K562 (cell line): ENCODE measurements at regions of chrX and their contacts with region 1.

Region 1: GRCh38 chrX:23782863-23783568 is at the start of gene SAT1:
- DNase-seq: peak; percentile 89 to 97 (median 91)
- ATAC-seq: peak; percentile 94
- H3K4me3 ChIP-seq: peak within 1 kb of the TSS; percentile 69
- H3K27ac ChIP-seq: peak within 1 kb of the TSS; percentile 92
- H3K4me1 ChIP-seq: peaks cover 10 to 11% of the 10 kb centered on the region in 2 experiments; a peak in 3 of 5 replicates
- H3K27me3 ChIP-seq: no peaks in the 10 kb centered on the region
- CTCF ChIP-seq: peak; percentile 76 to 84 (median 83)
- EP300 ChIP-seq: 0 out of 2 replicates have a peak, but pooled peaks have one; percentile 21
- POLR2A ChIP-seq: peak; percentile 99
- RAD21 ChIP-seq: peak; percentile 83 to 88
- polyA plus RNA-seq, gene SAT1: 161 to 194 TPM

Region 2: DNA sequence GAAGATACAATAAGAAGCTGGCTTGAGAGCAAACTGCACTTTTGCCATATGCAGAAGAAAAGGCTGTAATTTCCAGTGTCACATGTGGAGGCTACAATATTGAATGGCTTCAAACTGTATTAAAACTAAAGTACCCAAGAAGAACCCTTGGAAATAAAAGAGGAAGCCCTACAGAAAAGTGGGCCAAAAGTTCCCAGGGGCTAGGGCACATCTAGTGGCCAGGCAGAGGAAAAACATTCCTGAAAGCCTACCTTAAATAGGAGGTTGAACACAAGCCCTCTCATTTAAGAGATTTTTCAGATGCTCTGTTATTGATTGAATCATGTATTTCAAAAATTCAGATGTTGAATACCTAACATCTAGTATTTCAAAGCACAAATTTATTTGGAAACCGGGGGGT is 156.4 kb before region 1 on chrX:
- CTCF ChIA-PET with region 1: no interaction called
- POLR2A ChIA-PET with region 1: no interaction called
- in situ Hi-C with region 1: no loop called
- intact Hi-C with region 1: no loop called
- DNase-seq: no peak
- ATAC-seq: 0 out of 3 replicates have a peak, but pooled peaks have one; percentile 44
- H3K4me3 ChIP-seq: no peak overlapping the region
- H3K27ac ChIP-seq: no peak overlapping the region
- H3K4me1 ChIP-seq: no peaks in the 10 kb centered on the region
- H3K27me3 ChIP-seq: peaks cover 2 to 4% of the 10 kb centered on the region in 2 experiments; a peak in 1 of 5 replicates
- CTCF ChIP-seq: peak in 2 of 3 experiments; percentile 13 to 22; a peak in 2 of 6 replicates
- EP300 ChIP-seq: no peak
- POLR2A ChIP-seq: no peak
- RAD21 ChIP-seq: no peak

Region 3: GRCh38 chrX:23694606-23695005 is 88.4 kb before region 1 on chrX:
- CTCF ChIA-PET with region 1: interaction called, 3 read pairs
- POLR2A ChIA-PET with region 1: interaction called, 3 read pairs
- in situ Hi-C with region 1: no loop called
- intact Hi-C with region 1: loop called (anchors 2 kb)
- DNase-seq: peak; percentile 47 to 78 (median 58)
- ATAC-seq: peak; percentile 91
- H3K4me3 ChIP-seq: no peak overlapping the region
- H3K27ac ChIP-seq: no peak overlapping the region
- H3K4me1 ChIP-seq: peaks cover 0 to 4% of the 10 kb centered on the region in 2 experiments; a peak in 3 of 5 replicates
- H3K27me3 ChIP-seq: no peaks in the 10 kb centered on the region
- CTCF ChIP-seq: peak in 2 of 3 experiments; percentile 67 to 72; a peak in 4 of 6 replicates
- EP300 ChIP-seq: no peak
- POLR2A ChIP-seq: no peak
- RAD21 ChIP-seq: peak in 1 of 2 experiments; percentile 58; a peak in 2 of 4 replicates

Region 4: DNA sequence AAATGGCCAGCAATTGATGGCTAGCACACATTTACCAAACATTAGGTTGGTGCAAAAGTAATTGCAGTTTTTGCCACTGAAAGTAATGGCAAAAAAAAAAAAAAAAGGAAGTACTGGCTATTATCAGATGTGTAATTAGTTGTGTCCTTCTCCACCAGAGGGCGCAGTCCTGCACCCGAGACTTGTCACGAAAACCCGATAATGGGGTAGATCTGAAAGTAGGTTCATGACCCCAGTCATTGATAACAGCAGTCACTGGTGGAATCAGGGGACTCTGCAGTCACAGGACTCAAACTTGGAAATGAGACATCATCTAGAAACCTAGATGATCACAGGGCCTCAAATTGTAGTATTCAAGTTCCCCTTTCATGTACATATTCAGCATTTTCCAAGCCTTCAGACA is 26.9 kb before region 1 on chrX:
- CTCF ChIA-PET with region 1: interaction called, 9 read pairs
- POLR2A ChIA-PET with region 1: interaction called, 3 read pairs
- in situ Hi-C with region 1: no loop called
- intact Hi-C with region 1: loop called (anchors 1 kb)
- DNase-seq: peak; percentile 63 to 84 (median 66)
- ATAC-seq: peak; percentile 83
- H3K4me3 ChIP-seq: no peak overlapping the region
- H3K27ac ChIP-seq: no peak overlapping the region
- H3K4me1 ChIP-seq: peaks cover 0 to 3% of the 10 kb centered on the region in 2 experiments; a peak in 2 of 5 replicates
- H3K27me3 ChIP-seq: no peaks in the 10 kb centered on the region
- CTCF ChIP-seq: peak; percentile 64 to 73 (median 71)
- EP300 ChIP-seq: no peak
- POLR2A ChIP-seq: no peak
- RAD21 ChIP-seq: peak; percentile 46 to 58

Region 5: GRCh38 chrX:23844502-23845138 is 61.6 kb after region 1 on chrX:
- CTCF ChIA-PET with region 1: no interaction called
- POLR2A ChIA-PET with region 1: interaction called, 4 read pairs
- in situ Hi-C with region 1: no loop called
- intact Hi-C with region 1: loop called (anchors 2 kb)
- DNase-seq: peak; percentile 11 to 66 (median 26)
- ATAC-seq: peak; percentile 86
- H3K4me3 ChIP-seq: no peak overlapping the region
- H3K27ac ChIP-seq: peak overlapping the region; percentile 74
- H3K4me1 ChIP-seq: peaks cover 8 to 19% of the 10 kb centered on the region in 2 experiments; a peak in 4 of 5 replicates
- H3K27me3 ChIP-seq: no peaks in the 10 kb centered on the region
- CTCF ChIP-seq: no peak
- EP300 ChIP-seq: peak; percentile 74
- POLR2A ChIP-seq: no peak
- RAD21 ChIP-seq: peak in 1 of 2 experiments; percentile 23; a peak in 2 of 4 replicates

Region 6: DNA sequence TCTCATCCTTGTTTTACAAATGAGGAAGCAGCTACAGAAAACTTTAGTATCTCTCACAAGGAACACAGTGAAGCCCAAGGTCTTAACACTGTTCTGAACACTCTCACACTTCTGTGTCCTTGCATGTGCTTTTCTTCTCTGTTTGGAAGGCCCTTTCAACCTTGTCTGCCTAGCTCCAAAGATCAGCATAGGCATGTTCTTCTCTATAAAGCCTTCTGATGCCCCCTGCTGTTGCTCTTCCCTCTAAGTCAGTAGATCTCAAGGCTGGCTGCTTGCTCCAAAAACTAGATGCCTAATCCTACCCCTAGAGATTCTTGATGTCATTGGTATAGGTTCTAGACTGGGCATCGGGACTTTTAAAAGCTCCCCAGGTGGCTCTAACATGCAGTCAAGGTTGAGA is 118.8 kb after region 1 on chrX:
- CTCF ChIA-PET with region 1: interaction called, 32 read pairs
- POLR2A ChIA-PET with region 1: interaction called, 21 read pairs
- in situ Hi-C with region 1: loop called (anchors 5 kb)
- intact Hi-C with region 1: loop called (anchors 1 kb)
- DNase-seq: peak; percentile 13 to 75 (median 36)
- ATAC-seq: peak; percentile 94
- H3K4me3 ChIP-seq: no peak overlapping the region
- H3K27ac ChIP-seq: no peak overlapping the region
- H3K4me1 ChIP-seq: peaks cover 2 to 18% of the 10 kb centered on the region in 2 experiments; a peak in 3 of 5 replicates
- H3K27me3 ChIP-seq: no peaks in the 10 kb centered on the region
- CTCF ChIP-seq: peak; percentile 56 to 79 (median 73)
- EP300 ChIP-seq: no peak
- POLR2A ChIP-seq: no peak
- RAD21 ChIP-seq: peak; percentile 92 to 94